GM10248 (cell line): ENCODE measurements at regions of chr2 and their contacts with region 1.

Region 1: DNA sequence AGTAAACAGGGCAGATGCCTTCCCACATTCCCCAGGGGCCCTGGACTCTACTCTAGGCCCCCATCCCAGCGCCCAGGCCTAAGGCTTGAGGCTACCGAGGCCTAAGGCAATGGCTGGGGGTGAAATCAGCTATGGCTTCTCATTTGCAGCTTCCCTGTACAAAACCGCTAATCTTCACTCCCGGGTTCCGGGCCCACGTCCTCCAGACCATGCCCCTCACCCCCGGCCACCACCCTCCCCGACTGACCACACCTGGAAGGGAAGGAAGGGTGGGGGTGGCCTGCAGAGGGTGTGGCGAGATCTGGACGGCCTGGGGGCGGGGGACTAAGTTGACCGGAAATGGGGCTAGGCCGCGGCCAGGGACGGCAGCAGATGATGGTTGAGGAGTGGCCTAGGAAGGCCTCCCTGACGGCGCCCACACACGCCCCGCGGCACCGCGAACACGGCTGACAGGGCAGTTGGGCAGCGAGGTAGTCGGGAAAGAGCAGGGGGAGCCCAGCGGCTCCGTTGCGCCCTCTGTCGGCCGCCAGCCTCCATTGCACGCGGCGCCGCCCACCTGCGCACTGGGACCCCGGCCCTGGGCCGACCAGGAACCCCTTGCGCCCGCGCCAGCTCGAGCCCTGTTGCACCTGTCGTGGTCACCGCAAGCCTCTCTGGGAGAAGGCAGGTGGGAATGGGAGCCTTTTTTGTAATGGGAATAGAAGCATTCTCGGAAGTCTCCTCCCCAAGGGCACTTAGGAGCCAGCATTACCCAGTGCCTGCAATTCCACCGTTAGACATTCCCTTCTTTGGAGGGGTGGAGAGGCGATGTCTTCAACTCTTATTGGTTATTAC is 117.1 kb upstream of the STPG4 start:
- DNase-seq: peak; percentile 90
- CTCF ChIP-seq: peak; percentile 93

Region 2: DNA sequence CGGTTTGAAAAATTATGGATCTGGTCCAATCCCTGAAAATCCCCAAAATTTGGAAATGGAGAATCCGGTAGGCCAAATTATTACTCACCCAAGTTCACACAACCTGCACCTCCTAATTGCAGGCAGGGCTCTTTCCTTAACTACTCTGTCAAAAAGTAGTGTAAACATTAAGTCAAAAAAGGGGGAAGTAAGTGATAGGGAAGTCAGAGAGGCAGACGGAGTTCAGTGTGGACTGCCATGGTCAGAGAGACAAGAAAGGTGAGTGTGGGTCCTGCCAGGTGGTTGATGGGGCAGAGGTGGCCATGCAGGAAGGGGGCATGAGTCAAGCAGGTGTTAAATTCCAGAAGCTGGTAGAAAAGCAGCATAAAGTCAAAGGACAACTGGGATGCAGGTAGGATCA is 12.4 kb before region 1 on chr2:
- CTCF ChIA-PET with region 1: interaction called, 18 read pairs
- POLR2A ChIA-PET with region 1: no interaction called
- DNase-seq: no peak
- CTCF ChIP-seq: no peak

Region 3: GRCh38 chr2:47283659-47284058 is 11.4 kb after region 1 on chr2:
- CTCF ChIA-PET with region 1: interaction called, 31 read pairs
- POLR2A ChIA-PET with region 1: no interaction called
- DNase-seq: no peak
- CTCF ChIP-seq: no peak